ENCODE measurements at regions of chr20 and their contacts with region 1.

Region 1: DNA sequence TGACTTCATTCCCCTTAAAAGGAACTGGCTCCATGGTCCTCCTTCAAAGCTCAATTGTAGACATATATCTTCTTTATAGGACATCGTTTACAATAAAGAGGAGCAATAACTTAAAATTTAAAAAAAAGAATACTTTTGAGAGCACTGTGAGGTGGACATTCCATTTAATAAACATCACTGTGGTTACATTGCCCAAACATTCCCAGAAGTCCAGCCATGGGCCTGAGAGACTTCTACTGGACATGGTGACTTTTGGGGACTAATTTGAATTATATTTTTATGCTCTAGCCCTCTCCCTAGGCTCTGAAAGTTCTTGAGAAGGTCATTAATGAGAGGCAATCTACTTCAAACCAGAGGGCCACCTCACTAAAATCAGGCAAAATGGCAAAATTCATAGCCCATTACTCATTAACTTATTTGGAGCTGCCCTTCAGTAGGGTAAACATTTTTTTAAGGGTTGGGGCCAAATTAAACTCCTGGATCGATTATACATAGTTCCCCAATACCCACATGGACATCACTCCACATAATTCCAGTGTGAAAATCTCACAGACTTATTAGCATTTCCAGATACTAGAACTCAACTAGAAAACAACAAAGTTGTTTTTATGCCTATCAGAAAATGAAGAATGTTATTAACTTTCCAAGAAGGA is 17.1 kb downstream of the ISM1 start:
- DNase-seq: no peak
- ATAC-seq: no peak

Region 2: DNA sequence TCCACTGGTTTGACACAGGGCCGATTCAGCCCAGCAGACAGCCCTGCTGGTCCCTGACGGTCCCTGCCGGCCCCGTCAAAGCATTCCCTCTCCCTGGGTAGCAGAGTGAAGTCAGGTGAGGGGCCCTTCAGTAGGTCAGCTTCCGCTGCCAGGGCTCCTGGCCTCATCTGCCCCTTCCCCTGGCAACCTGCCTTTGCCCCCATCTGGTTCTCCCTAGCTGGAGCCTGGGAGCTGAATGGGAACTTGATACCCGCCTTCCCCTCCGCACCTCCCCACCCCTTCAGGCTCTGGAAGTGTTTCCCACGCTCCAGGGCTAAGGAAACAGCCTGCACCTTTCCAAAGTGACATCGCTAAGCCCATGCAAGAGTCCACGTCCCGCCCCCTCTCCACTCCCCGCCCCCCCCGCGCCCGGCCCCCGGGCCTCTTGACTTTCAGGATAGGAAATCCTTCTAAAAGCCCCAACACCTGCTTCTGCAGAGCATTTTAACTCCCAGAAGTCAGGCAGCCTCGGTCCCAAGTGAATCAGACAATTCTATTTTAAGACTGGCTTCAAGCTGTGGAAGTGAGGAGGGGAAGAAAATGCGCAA is 36.2 kb after region 1 on chr20:
- intact Hi-C with region 1: loop called (anchors 1 kb)
- DNase-seq: no peak
- ATAC-seq: no peak

Region 3: GRCh38 chr20:13363473-13363872 is 125.3 kb after region 1 on chr20:
- intact Hi-C with region 1: no loop called
- DNase-seq: no peak
- ATAC-seq: no peak

Measured in sciatic nerve (tissue), 2 donors.